Activated CD8-positive, alpha-beta T cell treated with anti-CD3 and anti-CD28 coated beads for 36 hours (primary cell): ENCODE measurements at regions of chr22 and their contacts with region 1.

Region 1: GRCh38 chr22:41666661-41667258 is 21.9 kb downstream of the SNU13 start:
- DNase-seq: peak; percentile 91
- ATAC-seq: peak; percentile 96
- H3K4me3 Mint-ChIP-seq: peak overlapping the region; percentile 76
- H3K27ac Mint-ChIP-seq: peak overlapping the region; percentile 94
- H3K4me1 Mint-ChIP-seq: peaks cover 11% of the 10 kb centered on the region
- H3K27me3 Mint-ChIP-seq: no peaks in the 10 kb centered on the region
- CTCF ChIP-seq: peak; percentile 96

Region 2: DNA sequence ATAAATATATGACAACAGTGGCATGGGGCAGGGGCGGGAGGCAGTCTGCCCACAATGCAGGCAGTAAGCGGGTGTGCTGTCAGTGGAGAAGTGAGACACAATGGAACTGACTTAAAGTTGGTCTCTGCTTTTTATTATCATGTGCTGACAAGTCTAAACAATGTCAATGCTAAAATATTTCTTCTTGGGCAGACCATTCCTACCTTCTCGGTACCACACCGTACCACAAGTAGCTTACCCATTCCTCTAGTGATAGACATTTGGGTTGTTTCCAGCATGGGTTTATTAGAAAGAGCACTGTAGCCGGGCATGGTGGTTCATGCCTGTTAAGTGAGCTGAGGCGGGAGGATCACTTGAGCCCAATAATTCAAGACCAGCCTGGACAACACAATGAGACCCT is 423.4 kb before region 1 on chr22:
- CTCF ChIA-PET with region 1: no interaction called
- POLR2A ChIA-PET with region 1: no interaction called
- intact Hi-C with region 1: no loop called
- DNase-seq: no peak
- ATAC-seq: no peak
- H3K4me3 Mint-ChIP-seq: no peak overlapping the region
- H3K27ac Mint-ChIP-seq: no peak overlapping the region
- H3K4me1 Mint-ChIP-seq: no peaks in the 10 kb centered on the region
- H3K27me3 Mint-ChIP-seq: no peaks in the 10 kb centered on the region
- CTCF ChIP-seq: no peak

Region 3: DNA sequence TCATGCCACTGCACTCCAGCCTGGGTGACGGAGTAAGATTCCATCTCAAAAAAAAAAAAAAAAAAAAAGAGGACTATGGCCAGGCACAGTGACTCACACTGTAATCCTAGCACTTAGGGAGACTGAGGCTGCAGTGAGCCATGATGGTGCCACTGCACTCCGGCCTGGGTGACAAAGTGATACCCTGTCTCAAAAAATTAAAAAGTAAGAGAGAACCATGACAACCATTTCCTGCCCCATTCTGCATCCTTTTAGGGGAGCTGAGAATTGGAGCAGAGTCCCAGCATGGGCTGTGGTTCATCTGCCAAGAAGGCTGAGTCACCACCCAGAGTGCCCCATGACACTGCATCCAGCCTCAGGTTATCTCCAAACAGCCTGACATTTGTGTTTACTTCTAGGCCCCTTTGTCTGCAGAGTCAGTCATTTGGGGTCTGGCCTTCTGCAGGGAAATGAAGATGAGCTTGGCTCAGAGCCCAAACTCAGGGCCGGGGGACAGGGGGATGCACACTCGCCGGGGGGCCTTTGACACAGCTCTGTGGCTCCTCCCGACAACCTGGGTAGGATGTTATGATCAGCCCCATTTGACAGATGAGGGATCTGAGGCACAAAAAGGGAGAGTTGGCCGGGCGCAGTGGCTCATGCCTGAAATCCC is 101.2 kb before region 1 on chr22:
- CTCF ChIA-PET with region 1: no interaction called
- POLR2A ChIA-PET with region 1: no interaction called
- intact Hi-C with region 1: no loop called
- DNase-seq: peak; percentile 72
- ATAC-seq: peak; percentile 92
- H3K4me3 Mint-ChIP-seq: no peak overlapping the region
- H3K27ac Mint-ChIP-seq: no peak overlapping the region
- H3K4me1 Mint-ChIP-seq: peaks cover 5% of the 10 kb centered on the region
- H3K27me3 Mint-ChIP-seq: peaks cover 7% of the 10 kb centered on the region
- CTCF ChIP-seq: no peak

Region 4: DNA sequence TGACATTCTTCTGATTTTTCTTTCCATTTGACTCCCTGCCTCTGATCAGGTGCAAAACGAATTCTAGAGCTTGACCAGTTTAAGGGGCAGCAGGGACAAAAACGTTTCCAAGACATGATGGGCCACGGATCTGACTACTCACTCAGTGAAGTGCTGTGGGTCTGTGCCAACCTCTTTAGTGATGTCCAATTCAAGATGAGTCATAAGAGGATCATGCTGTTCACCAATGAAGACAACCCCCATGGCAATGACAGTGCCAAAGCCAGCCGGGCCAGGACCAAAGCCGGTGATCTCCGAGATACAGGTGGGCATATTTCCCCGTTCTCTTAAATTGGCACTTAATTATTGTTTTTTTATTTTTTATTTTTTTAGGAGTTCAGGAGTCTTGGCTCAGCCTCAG is 30.3 kb before region 1 on chr22:
- CTCF ChIA-PET with region 1: interaction called, 10 read pairs
- POLR2A ChIA-PET with region 1: interaction called, 3 read pairs
- intact Hi-C with region 1: no loop called
- DNase-seq: no peak
- ATAC-seq: no peak
- H3K4me3 Mint-ChIP-seq: no peak overlapping the region
- H3K27ac Mint-ChIP-seq: peak overlapping the region; percentile 49
- H3K4me1 Mint-ChIP-seq: peaks cover 5% of the 10 kb centered on the region
- H3K27me3 Mint-ChIP-seq: no peaks in the 10 kb centered on the region
- CTCF ChIP-seq: no peak

Region 5: DNA sequence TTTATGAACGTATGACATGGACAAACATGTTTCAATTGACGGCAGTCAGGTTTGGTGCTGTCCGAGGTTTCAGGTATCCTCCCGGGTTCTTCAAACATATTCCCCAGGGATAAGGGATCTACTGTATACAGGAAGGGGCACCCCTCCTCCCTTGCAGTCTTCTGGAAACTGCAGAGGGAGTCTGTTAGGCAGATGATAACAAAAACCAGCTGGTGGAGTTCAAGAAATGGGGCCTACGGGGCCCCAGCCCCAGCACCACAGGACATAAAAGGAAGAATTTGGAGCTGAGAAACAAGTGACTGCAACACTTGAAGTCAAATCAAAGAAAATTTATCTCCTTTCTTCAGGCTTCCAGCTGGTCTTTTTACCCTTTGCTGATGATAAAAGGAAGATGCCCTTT is 10.2 kb before region 1 on chr22:
- CTCF ChIA-PET with region 1: interaction called, 66 read pairs
- POLR2A ChIA-PET with region 1: interaction called, 8 read pairs
- intact Hi-C with region 1: no loop called
- DNase-seq: no peak
- ATAC-seq: no peak
- H3K4me3 Mint-ChIP-seq: no peak overlapping the region
- H3K27ac Mint-ChIP-seq: no peak overlapping the region
- H3K4me1 Mint-ChIP-seq: no peaks in the 10 kb centered on the region
- H3K27me3 Mint-ChIP-seq: no peaks in the 10 kb centered on the region
- CTCF ChIP-seq: no peak

Region 6: GRCh38 chr22:41682033-41682807 is 15.5 kb after region 1 on chr22:
- CTCF ChIA-PET with region 1: interaction called, 29 read pairs
- POLR2A ChIA-PET with region 1: interaction called, 5 read pairs
- intact Hi-C with region 1: no loop called
- DNase-seq: peak; percentile 88
- ATAC-seq: peak; percentile 84
- H3K4me3 Mint-ChIP-seq: peak overlapping the region; percentile 100
- H3K27ac Mint-ChIP-seq: peak overlapping the region; percentile 98
- H3K4me1 Mint-ChIP-seq: peaks cover 31% of the 10 kb centered on the region
- H3K27me3 Mint-ChIP-seq: no peaks in the 10 kb centered on the region
- CTCF ChIP-seq: no peak

Region 7: GRCh38 chr22:41688365-41689211 is 21.8 kb after region 1 on chr22 and contains the start of gene SNU13:
- CTCF ChIA-PET with region 1: interaction called, 23 read pairs
- POLR2A ChIA-PET with region 1: interaction called, 6 read pairs
- intact Hi-C with region 1: no loop called
- DNase-seq: peak; percentile 95
- ATAC-seq: peak; percentile 95
- H3K4me3 Mint-ChIP-seq: peak within 1 kb of the TSS; percentile 91
- H3K27ac Mint-ChIP-seq: peak within 1 kb of the TSS; percentile 95
- H3K4me1 Mint-ChIP-seq: peaks cover 26% of the 10 kb centered on the region
- H3K27me3 Mint-ChIP-seq: no peaks in the 10 kb centered on the region
- CTCF ChIP-seq: no peak
- total RNA-seq, gene SNU13: 275 to 299 TPM